Calu3 (cell line): ENCODE measurements at regions of chr4 and their contacts with region 1.

Region 1: GRCh38 chr4:17934286-17934685 is 87.3 kb downstream of the LCORL start:
- DNase-seq: no peak
- H3K4me3 Mint-ChIP-seq: no peak overlapping the region
- H3K27ac Mint-ChIP-seq: no peak overlapping the region
- H3K4me1 Mint-ChIP-seq: no peaks in the 10 kb centered on the region
- H3K27me3 Mint-ChIP-seq: no peaks in the 10 kb centered on the region
- CTCF ChIP-seq: no peak

Region 2: GRCh38 chr4:17985832-17986231 is 51.5 kb after region 1 on chr4:
- CTCF ChIA-PET with region 1: no interaction called
- intact Hi-C with region 1: no loop called
- DNase-seq: no peak
- H3K4me3 Mint-ChIP-seq: no peak overlapping the region
- H3K27ac Mint-ChIP-seq: no peak overlapping the region
- H3K4me1 Mint-ChIP-seq: no peaks in the 10 kb centered on the region
- H3K27me3 Mint-ChIP-seq: no peaks in the 10 kb centered on the region
- CTCF ChIP-seq: no peak

Region 3: DNA sequence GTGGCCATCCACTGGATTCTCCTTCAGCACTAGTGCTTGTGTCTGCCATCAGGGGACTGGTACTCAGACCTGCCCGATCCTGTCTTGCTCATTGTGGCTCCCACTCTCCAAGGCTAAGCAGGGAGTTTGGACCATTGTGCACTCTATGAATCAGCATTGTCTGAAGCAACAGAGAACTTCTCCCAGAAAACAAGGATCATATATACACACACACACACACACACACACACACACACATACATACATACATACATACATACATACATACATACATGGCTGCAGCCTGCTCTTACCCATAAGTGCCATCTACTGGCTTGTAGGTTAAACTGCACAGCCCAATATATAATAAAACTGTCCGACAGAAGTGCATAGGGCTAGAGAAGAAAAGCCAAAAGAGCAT is 432.6 kb after region 1 on chr4:
- CTCF ChIA-PET with region 1: no interaction called
- intact Hi-C with region 1: loop called (anchors 5 kb)
- DNase-seq: no peak
- H3K4me3 Mint-ChIP-seq: no peak overlapping the region
- H3K27ac Mint-ChIP-seq: no peak overlapping the region
- H3K4me1 Mint-ChIP-seq: no peaks in the 10 kb centered on the region
- H3K27me3 Mint-ChIP-seq: no peaks in the 10 kb centered on the region
- CTCF ChIP-seq: no peak

Region 4: DNA sequence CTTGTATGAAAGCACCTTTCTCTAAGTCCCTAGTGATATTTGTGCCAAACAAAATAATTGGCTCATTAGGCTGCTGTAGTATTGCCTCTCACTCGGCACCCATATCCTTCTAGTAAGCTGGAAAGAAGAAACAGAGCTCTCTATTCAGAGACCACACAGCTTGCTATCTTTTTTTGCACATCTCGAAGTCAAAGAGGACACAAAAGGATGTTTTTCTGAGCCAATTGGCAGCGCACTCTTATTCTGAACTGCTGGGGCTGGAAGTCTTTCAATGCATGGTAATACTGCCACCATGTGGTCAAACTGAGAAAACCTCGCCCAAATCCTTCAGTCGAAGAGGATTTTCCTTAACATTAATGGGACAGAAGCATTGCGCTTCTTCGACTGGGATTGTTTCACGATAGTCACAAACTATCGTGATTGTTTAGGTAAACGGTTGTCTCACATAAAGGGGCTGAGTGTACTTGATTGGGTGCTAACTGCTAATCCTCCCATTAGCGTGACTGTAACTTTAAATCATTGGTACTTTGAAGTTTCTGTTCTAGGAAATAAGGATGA is 659.2 kb after region 1 on chr4:
- CTCF ChIA-PET with region 1: no interaction called
- intact Hi-C with region 1: loop called (anchors 1 kb)
- DNase-seq: peak; percentile 45
- H3K4me3 Mint-ChIP-seq: peak overlapping the region; percentile 55
- H3K27ac Mint-ChIP-seq: no peak overlapping the region
- H3K4me1 Mint-ChIP-seq: no peaks in the 10 kb centered on the region
- H3K27me3 Mint-ChIP-seq: peaks cover 9% of the 10 kb centered on the region
- CTCF ChIP-seq: peak; percentile 37